HEK293 (cell line): ENCODE measurements at regions of chr1 and their contacts with region 1.

Region 1: GRCh38 chr1:207828485-207829158 is 76.8 kb downstream of the CD46 start:
- H3K4me3 ChIP-seq: no peak overlapping the region
- H3K27ac ChIP-seq: no peak overlapping the region
- H3K4me1 ChIP-seq: no peaks in the 10 kb centered on the region
- CTCF ChIP-seq: peak; percentile 60

Region 2: GRCh38 chr1:207840380-207840779 is 11.8 kb after region 1 on chr1:
- CTCF ChIA-PET with region 1: interaction called, 13 read pairs
- POLR2A ChIA-PET with region 1: no interaction called
- H3K4me3 ChIP-seq: no peak overlapping the region
- H3K27ac ChIP-seq: no peak overlapping the region
- H3K4me1 ChIP-seq: no peaks in the 10 kb centered on the region
- CTCF ChIP-seq: no peak

Region 3: GRCh38 chr1:207868774-207869721 is 40.4 kb after region 1 on chr1:
- CTCF ChIA-PET with region 1: interaction called, 27 read pairs
- POLR2A ChIA-PET with region 1: no interaction called
- H3K4me3 ChIP-seq: peak overlapping the region; percentile 71
- H3K27ac ChIP-seq: peak overlapping the region; percentile 74; the same call in 1 of the 2 replicates
- H3K4me1 ChIP-seq: 0 out of 2 replicates have a peak, but pooled peaks cover 2% of the 10 kb centered on the region
- CTCF ChIP-seq: 0 out of 2 replicates have a peak, but pooled peaks have one; percentile 11

Region 4: DNA sequence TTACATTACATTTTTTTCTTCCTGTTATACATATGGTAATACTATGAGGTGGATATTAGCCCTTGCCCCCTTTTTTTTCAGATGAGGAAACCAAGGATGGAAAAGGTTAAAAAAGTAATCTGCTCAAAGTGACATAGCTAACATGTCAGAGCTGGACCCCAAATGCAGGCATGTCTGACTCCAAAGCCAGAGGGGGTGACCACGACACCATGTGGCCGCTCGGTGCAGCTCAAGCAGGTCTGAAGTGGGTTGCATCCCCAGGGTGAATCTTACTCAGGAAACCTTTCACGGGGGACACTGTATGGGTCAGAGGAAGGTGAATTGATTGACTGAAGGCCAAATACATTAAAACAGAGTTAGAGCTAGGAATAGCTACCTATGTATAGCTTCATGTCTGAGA is 47.5 kb after region 1 on chr1:
- CTCF ChIA-PET with region 1: interaction called, 16 read pairs
- POLR2A ChIA-PET with region 1: no interaction called
- H3K4me3 ChIP-seq: no peak overlapping the region
- H3K27ac ChIP-seq: no peak overlapping the region
- H3K4me1 ChIP-seq: no peaks in the 10 kb centered on the region
- CTCF ChIP-seq: no peak

Region 5: DNA sequence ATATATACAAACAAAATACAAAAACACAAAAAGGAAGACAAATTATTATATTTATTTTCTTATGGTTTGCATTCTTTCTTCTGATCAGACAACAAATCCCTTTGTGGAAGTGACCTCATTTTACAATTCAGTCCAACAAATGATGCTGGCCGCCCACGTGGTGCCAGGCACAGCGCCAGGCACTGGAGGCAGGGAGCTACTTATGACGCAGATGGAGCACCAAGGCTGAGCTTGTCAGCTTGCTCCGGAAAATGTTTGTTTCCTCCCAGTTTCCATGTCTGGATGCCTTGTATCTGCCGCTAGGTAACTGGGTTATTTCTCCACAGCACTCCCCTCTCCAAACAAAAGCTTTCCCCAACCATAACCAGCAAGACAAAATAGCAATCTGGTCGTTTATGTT is 113.0 kb after region 1 on chr1:
- CTCF ChIA-PET with region 1: no interaction called
- POLR2A ChIA-PET with region 1: no interaction called
- H3K4me3 ChIP-seq: no peak overlapping the region
- H3K27ac ChIP-seq: no peak overlapping the region
- H3K4me1 ChIP-seq: no peaks in the 10 kb centered on the region
- CTCF ChIP-seq: no peak

Region 6: DNA sequence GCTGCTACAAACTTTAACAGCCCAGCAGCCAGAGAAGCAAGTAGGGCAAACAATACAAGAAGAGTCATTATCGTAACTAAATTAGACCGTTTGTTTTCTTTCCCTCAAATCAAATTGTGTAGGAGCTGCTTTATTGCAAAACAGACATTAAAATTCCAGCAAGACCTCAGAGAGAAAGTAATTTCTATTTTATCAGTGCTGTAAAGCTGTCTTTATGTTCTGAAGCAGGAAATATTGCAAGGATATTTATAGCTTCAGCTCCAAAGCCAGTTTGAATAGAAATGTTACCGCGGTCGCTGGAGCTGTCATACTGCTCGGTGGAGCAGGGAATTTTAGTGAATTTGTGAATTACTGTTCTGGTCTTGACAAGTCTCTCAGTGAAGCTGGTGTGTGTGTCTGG is 919.4 kb after region 1 on chr1:
- CTCF ChIA-PET with region 1: no interaction called
- POLR2A ChIA-PET with region 1: no interaction called
- H3K4me3 ChIP-seq: no peak overlapping the region
- H3K27ac ChIP-seq: peak overlapping the region; percentile 21
- H3K4me1 ChIP-seq: peaks cover 8% of the 10 kb centered on the region
- CTCF ChIP-seq: no peak